ENCODE measurements at regions of chr14 and their contacts with region 1.

Region 1: DNA sequence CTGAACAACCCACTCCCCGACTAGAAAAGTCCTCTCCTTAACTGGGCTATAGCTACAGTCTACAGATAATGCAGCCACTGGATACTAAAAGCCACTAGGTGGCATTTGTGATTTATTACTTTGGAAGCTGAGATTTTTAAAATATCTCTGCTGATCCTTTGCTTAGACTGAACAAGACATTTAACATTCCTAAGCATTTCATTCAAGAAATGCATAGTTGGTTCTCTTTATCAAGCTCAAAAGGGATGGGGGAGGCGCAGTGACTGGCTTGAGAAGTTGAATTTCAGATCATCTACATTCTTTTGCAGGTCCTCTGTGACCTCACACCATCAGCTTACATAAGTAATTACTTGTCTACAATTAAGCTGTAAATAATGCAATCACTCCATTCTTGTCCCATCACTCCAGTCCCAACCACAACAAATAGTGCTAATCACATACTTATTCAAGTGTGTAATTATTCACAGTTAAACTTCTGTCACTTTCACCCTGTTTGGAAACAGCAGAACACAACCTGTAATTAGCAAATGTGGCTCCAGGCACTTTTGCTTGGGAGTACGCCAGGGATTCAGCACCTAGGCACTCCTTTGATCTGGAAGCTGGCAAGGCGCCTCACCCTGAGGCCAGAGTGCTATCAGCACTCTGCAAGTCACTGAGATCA is 203.6 kb downstream of the NOVA1 start:
- DNase-seq: peak; percentile 54 to 93
- H3K4me3 ChIP-seq: no peak overlapping the region
- H3K27ac ChIP-seq: peak overlapping the region; percentile 28
- H3K4me1 ChIP-seq: peaks cover 24% of the 10 kb centered on the region
- H3K27me3 ChIP-seq: no peaks in the 10 kb centered on the region
- CTCF ChIP-seq: peak; percentile 62

Region 2: DNA sequence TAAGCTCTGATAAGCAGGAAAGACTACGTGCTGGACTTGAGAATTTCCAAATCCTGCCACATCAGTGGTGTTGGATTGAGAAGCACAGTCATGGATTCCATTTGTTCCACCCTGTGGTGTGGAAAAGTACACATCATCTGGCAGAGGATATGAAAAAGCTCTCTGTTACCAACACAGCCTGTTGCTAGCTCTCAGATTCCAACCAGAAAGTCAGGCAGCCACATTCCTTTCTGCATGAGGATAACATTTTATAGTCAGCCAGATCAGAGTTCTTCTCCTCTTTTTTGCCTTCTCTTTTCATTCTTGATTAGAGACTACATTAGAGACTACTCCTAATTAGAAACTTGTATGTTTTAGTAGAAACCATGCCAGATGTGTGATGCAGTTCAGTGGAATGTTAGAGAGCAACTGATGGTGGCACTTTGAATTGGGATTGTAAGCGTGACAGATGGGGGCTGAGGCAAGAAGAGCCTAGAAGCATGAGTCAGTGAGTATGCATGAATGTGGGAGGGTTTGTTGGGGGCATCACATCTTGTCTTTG is 1283.1 kb before region 1 on chr14:
- CTCF ChIA-PET with region 1: no interaction called
- POLR2A ChIA-PET with region 1: no interaction called
- intact Hi-C with region 1: no loop called
- DNase-seq: peak; percentile 53 to 80
- H3K4me3 ChIP-seq: no peak overlapping the region
- H3K27ac ChIP-seq: peak overlapping the region; percentile 32; the same call in 1 of the 2 replicates
- H3K4me1 ChIP-seq: no peaks in the 10 kb centered on the region; the same call in 1 of the 2 replicates
- H3K27me3 ChIP-seq: no peaks in the 10 kb centered on the region
- CTCF ChIP-seq: no peak

Region 3: DNA sequence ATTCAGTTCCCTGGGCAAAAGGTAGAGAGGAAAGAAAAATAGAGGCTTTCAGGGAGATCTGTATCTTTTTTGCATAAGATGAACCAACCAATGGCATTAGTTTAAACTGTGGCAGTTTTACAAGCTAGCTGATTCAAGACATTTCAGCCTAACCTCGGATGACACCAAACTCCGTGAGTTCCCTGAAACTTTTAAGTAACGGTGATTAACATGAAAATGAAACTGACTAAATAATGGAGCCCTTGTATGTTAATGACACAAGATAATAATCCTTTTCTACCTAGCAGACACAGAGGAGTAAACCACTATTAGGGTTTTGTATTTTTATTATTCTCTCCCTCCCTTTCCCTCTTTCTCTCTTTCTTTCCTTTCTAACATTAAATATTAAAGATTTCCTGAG is 280.4 kb before region 1 on chr14:
- CTCF ChIA-PET with region 1: no interaction called
- POLR2A ChIA-PET with region 1: no interaction called
- intact Hi-C with region 1: no loop called
- DNase-seq: no peak
- H3K4me3 ChIP-seq: no peak overlapping the region
- H3K27ac ChIP-seq: no peak overlapping the region
- H3K4me1 ChIP-seq: no peaks in the 10 kb centered on the region
- H3K27me3 ChIP-seq: no peaks in the 10 kb centered on the region
- CTCF ChIP-seq: no peak

Region 4: DNA sequence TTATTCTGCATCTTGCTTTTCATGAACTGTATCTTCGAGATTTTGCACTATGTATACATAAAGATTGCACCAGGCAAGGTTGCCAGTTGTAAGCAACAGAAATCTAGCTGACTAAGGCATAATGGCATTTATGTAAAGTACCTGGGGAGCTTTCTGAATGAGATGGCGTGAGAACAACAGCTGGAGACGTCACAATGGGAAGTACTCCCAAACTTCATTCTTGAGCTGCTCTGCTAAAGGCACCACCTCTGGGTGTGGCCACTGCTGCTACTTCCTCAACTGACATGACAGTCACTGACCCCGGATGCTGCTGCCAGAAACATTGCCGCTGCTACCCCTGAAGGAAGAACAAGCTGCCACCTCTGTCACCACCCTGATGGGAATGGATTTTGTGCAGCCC is 17.1 kb before region 1 on chr14:
- CTCF ChIA-PET with region 1: interaction called, 3 read pairs
- POLR2A ChIA-PET with region 1: interaction called, 11 read pairs
- intact Hi-C with region 1: no loop called
- DNase-seq: peak in 1 of 2 experiments; percentile 35
- H3K4me3 ChIP-seq: no peak overlapping the region
- H3K27ac ChIP-seq: no peak overlapping the region
- H3K4me1 ChIP-seq: no peaks in the 10 kb centered on the region
- H3K27me3 ChIP-seq: no peaks in the 10 kb centered on the region
- CTCF ChIP-seq: no peak

Region 5: GRCh38 chr14:26984311-26985177 is 590.3 kb after region 1 on chr14:
- CTCF ChIA-PET with region 1: no interaction called
- POLR2A ChIA-PET with region 1: no interaction called
- intact Hi-C with region 1: loop called (anchors 1 kb)
- DNase-seq: peak in 1 of 2 experiments; percentile 17
- H3K4me3 ChIP-seq: no peak overlapping the region
- H3K27ac ChIP-seq: no peak overlapping the region
- H3K4me1 ChIP-seq: no peaks in the 10 kb centered on the region
- H3K27me3 ChIP-seq: no peaks in the 10 kb centered on the region
- CTCF ChIP-seq: peak; percentile 82

Region 6: GRCh38 chr14:27528328-27528727 is 1134.0 kb after region 1 on chr14:
- CTCF ChIA-PET with region 1: no interaction called
- POLR2A ChIA-PET with region 1: no interaction called
- intact Hi-C with region 1: loop called (anchors 10 kb)
- DNase-seq: no peak
- H3K4me3 ChIP-seq: no peak overlapping the region
- H3K27ac ChIP-seq: no peak overlapping the region
- H3K4me1 ChIP-seq: no peaks in the 10 kb centered on the region
- H3K27me3 ChIP-seq: no peaks in the 10 kb centered on the region
- CTCF ChIP-seq: peak; percentile 68

Measured in PC-9 (cell line).